Mammary epithelial cell (primary cell): ENCODE measurements at regions of chr19 and their contacts with region 1.

Region 1: GRCh38 chr19:52853880-52854279 is 3.5 kb downstream of the ZNF468 start:
- DNase-seq: no peak
- H3K4me3 ChIP-seq: no peak overlapping the region
- H3K27ac ChIP-seq: no peak overlapping the region
- H3K4me1 ChIP-seq: peaks cover 3% of the 10 kb centered on the region
- H3K27me3 ChIP-seq: no peaks in the 10 kb centered on the region
- CTCF ChIP-seq: no peak

Region 2: DNA sequence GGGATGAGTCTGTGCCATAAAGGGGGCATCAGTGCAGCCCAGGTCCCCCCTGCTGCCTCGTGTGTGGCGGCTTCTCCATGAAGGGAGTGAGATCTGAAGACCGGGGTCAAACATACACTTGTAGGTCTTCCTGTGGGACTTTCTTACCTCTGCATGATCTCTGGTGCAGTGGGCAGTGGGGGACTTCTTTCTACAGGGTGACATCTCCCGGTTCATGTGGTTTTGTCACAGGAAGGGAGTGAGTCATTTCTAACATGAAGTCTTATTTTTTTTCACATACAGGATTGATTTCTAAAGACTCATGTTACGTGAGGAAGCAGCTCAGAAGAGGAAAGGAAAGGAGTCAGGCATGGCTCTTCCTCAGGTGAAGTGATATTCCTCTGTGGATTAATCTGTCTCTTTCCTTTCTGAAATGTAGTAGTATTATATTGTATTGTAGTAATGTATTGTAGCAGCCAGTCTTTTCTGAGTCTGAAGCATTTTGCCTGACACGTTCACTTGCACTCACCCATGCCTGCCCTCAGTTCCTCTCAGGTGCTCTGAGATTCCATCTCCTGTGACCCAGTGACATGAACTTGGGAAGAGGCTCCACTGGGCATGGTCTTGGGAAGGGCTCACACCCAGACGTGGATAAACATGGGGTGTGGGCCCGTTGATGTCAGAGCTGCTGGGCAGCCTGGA is 310.8 kb before region 1 on chr19:
- CTCF ChIA-PET with region 1: no interaction called
- dilution Hi-C with region 1: no loop called
- in situ Hi-C with region 1: no loop called
- intact Hi-C with region 1: no loop called
- DNase-seq: no peak
- H3K4me3 ChIP-seq: no peak overlapping the region
- H3K27ac ChIP-seq: no peak overlapping the region
- H3K4me1 ChIP-seq: no peaks in the 10 kb centered on the region
- H3K27me3 ChIP-seq: no peaks in the 10 kb centered on the region
- CTCF ChIP-seq: no peak

Region 3: GRCh38 chr19:52823676-52824075 is 30.2 kb before region 1 on chr19:
- CTCF ChIA-PET with region 1: no interaction called
- dilution Hi-C with region 1: no loop called
- in situ Hi-C with region 1: no loop called
- intact Hi-C with region 1: loop called (anchors 2 kb)
- DNase-seq: no peak
- H3K4me3 ChIP-seq: no peak overlapping the region
- H3K27ac ChIP-seq: no peak overlapping the region
- H3K4me1 ChIP-seq: no peaks in the 10 kb centered on the region
- H3K27me3 ChIP-seq: no peaks in the 10 kb centered on the region
- CTCF ChIP-seq: no peak